ENCODE measurements at regions of chr3 and their contacts with region 1.

Region 1: DNA sequence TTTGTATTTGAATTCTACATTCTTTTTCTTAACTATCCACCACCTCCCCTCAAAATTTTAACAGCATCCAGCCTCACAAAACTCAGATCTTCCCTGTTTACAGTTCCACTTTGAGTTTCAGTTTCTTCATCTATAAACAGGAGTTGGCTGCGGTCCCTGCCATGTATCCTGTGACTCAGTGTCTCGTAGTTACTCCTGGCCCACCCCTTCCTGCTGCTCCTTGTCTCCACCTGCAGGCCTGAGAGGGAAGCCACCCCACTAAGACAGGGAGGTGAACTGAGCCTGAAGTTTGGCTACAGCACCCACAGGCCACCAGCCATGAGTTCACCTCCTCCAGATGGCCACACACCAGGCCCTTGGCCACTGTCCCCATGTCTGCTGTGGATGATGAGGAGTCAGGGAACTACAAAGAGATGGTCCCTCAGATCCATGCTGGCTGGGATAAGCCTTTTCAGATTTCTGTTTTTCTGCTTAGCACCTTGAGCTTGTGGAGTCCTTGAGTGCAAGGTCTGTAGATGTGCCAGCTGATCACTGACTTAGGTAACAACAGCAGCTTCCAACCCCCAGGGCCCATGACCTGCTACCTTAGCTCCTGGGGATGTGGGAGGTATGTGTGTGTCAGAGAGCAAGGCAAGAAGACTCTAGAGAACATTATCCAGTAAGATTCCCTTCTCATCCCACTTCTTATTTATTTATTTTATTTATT is 37.5 kb downstream of the CD86 start:
- DNase-seq: peak; percentile 50
- H3K4me3 Mint-ChIP-seq: peak overlapping the region; percentile 12
- H3K27ac Mint-ChIP-seq: peak overlapping the region; percentile 91
- H3K4me1 Mint-ChIP-seq: peaks cover 29% of the 10 kb centered on the region
- H3K27me3 Mint-ChIP-seq: no peaks in the 10 kb centered on the region

Region 2: DNA sequence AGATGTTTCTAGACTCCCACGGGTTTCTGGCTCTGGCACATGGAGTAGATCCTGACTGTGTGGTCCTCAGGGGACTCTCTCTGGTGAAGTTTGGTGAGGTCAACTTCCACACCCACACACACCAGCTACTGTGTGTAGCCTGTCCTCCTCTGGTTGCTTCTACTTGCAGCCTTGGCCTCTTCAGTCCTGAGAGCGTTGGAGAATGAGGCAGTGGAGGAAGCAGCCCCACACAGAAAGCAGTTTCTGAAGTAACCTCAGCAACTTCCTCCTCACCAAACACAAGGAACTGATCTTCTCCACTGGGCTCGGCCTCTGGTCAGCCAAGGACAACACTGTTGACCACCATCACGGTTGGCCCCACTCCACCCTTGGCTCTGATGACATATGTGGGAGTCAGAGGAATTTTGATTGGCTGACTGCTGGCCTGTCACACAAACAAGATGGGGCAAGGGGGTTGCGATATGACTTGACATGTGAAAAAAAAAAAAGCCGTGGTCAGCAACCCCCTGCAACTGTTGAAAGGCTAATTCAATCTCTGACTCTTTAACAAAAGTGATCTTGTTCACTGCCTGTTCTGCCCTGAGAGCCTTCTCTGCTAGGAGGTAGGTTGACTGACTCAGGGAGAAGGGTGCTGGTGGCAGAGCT is 17.9 kb before region 1 on chr3:
- CTCF ChIA-PET with region 1: interaction called, 10 read pairs
- POLR2A ChIA-PET with region 1: no interaction called
- DNase-seq: peak; percentile 26
- H3K4me3 Mint-ChIP-seq: peak overlapping the region; percentile 60
- H3K27ac Mint-ChIP-seq: peak overlapping the region; percentile 88
- H3K4me1 Mint-ChIP-seq: peaks cover 46% of the 10 kb centered on the region
- H3K27me3 Mint-ChIP-seq: no peaks in the 10 kb centered on the region

Region 3: DNA sequence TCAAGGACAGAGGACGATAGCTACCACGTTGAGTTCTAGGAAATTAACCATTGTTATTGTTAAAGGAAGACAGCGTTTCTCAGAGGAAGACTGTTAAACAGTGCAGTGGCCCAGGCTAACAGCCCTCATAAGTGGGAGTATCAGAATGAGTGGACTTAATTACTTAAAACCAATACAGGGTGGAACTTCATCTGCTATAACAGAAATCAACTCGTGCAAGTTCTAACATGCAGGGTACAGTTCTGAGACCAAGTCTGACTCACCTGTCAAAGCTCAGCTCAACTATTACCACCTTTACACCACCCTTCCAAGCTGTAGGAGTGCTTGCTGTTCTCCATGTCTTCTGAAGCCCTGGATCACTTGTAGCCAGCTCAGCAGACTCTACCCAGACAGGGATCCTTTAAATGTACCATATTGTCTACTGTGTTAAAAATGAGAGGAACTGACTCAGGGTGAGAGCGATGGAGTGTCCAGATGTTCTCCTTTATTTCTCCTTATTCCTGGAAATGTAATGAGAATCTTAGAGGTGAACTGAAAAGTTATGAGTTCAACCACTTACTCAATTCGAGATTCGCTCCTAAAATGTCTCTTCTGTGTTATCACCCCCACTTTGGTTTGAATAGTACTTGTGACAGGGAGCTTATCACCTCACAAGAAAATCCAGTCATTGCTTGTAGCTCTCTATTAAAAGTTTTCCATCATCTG is 10.9 kb before region 1 on chr3:
- CTCF ChIA-PET with region 1: interaction called, 39 read pairs
- POLR2A ChIA-PET with region 1: interaction called, 4 read pairs
- DNase-seq: no peak
- H3K4me3 Mint-ChIP-seq: no peak overlapping the region
- H3K27ac Mint-ChIP-seq: peak overlapping the region; percentile 51
- H3K4me1 Mint-ChIP-seq: peaks cover 58% of the 10 kb centered on the region
- H3K27me3 Mint-ChIP-seq: no peaks in the 10 kb centered on the region